GM13976 (cell line): ENCODE measurements at regions of chr5 and their contacts with region 1.

Region 1: GRCh38 chr5:132489871-132490485 is 595 bp downstream of the IRF1 start:
- DNase-seq: peak; percentile 81
- CTCF ChIP-seq: peak; percentile 26

Region 2: GRCh38 chr5:132419502-132420468 is 70.2 kb before region 1 on chr5:
- in situ Hi-C with region 1: loop called (anchors 5 kb)
- DNase-seq: peak; percentile 70
- CTCF ChIP-seq: peak; percentile 85